Calu3 (cell line): ENCODE measurements at regions of chr5 and their contacts with region 1.

Region 1: DNA sequence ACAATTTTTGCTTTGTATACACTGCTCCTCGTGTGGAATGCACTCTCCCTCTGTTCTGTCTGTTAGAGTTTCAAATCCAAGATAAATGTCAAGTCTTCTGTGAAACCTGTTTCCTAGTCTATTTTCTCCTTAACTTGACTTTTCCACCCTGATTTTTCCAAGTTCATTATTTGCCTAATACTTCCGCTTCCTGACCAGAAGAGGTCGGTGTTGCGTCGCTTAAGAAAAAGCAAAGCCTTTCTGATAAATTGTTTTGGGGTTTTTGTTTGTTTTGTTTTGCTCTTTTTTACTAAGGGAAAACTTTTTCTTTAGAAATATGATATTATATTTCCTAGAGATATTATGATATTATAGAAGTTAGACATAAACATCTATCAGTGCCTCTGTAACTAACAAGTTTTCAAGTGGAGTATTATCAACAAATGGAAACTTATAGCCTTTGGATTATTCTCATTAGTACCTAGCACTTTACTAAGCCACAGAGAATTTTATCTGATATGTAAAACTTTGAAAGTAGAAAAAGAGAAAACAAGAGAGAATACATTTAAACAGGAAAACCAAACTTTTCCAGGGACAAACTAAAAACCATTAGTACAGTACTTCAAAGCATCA is 55.8 kb downstream of the PHAX start:
- DNase-seq: peak; percentile 13
- H3K4me3 Mint-ChIP-seq: no peak overlapping the region
- H3K27ac Mint-ChIP-seq: no peak overlapping the region
- H3K4me1 Mint-ChIP-seq: no peaks in the 10 kb centered on the region
- H3K27me3 Mint-ChIP-seq: no peaks in the 10 kb centered on the region
- CTCF ChIP-seq: peak; percentile 82

Region 2: DNA sequence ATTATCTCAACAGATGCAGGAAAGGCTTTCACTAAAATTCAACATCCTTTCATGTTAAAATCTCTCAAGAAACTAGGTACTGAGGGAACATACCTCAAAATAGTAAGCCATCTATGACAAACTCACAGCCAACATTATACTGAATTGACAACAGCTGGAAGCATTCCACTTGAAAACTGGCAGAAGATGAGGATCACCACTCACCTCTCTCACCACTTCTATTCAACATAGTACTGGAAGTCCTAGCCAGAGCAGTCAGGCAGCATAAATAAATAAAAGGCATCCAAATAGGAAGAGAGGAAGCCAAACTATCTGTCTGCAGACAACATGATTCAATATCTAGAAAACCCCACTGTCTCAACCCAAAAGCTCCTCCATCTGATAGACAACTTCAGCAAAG is 436.9 kb before region 1 on chr5:
- CTCF ChIA-PET with region 1: no interaction called
- intact Hi-C with region 1: no loop called
- DNase-seq: no peak
- H3K4me3 Mint-ChIP-seq: no peak overlapping the region
- H3K27ac Mint-ChIP-seq: no peak overlapping the region
- H3K4me1 Mint-ChIP-seq: no peaks in the 10 kb centered on the region
- H3K27me3 Mint-ChIP-seq: no peaks in the 10 kb centered on the region
- CTCF ChIP-seq: no peak

Region 3: GRCh38 chr5:126801992-126802294 is 145.4 kb after region 1 on chr5:
- CTCF ChIA-PET with region 1: interaction called, 3 read pairs
- intact Hi-C with region 1: loop called (anchors 5 kb)
- DNase-seq: no peak
- H3K4me3 Mint-ChIP-seq: no peak overlapping the region
- H3K27ac Mint-ChIP-seq: no peak overlapping the region
- H3K4me1 Mint-ChIP-seq: peaks cover 23% of the 10 kb centered on the region
- H3K27me3 Mint-ChIP-seq: no peaks in the 10 kb centered on the region
- CTCF ChIP-seq: no peak

Region 4: DNA sequence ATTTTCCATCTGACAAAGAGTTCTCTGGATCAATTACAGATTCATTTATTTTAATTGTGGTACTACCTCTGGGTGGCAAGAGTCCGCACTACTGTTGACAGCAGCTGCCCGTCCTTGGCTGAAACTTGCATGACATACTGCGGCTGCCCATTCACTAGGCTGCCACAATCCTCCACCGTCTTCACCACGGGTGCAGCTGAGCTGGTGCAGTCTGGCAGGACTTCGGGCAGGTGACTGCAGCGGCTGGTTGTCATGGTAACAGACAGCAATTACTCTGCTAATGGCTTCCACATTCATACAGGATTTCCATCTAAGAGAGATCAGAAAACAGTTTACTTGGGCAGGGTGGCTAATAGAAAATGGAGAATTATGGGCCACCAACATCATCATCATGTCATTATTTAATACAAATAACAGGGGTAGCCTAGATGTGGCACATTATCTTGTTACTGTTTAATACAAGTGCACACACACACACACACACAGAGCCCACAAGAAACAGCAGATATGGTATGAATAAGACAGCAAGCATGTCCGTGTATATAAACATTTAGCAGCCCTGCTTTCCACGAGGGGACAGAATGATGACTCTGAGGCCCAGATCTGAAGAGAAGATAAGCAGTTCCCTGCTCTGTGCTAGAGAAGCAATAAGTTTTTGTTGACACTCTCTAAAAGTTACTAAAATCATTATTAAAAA is 261.6 kb after region 1 on chr5:
- CTCF ChIA-PET with region 1: no interaction called
- intact Hi-C with region 1: no loop called
- DNase-seq: peak; percentile 67
- H3K4me3 Mint-ChIP-seq: peak overlapping the region; percentile 50
- H3K27ac Mint-ChIP-seq: peak overlapping the region; percentile 63
- H3K4me1 Mint-ChIP-seq: peaks cover 33% of the 10 kb centered on the region
- H3K27me3 Mint-ChIP-seq: no peaks in the 10 kb centered on the region
- CTCF ChIP-seq: no peak

Region 5: DNA sequence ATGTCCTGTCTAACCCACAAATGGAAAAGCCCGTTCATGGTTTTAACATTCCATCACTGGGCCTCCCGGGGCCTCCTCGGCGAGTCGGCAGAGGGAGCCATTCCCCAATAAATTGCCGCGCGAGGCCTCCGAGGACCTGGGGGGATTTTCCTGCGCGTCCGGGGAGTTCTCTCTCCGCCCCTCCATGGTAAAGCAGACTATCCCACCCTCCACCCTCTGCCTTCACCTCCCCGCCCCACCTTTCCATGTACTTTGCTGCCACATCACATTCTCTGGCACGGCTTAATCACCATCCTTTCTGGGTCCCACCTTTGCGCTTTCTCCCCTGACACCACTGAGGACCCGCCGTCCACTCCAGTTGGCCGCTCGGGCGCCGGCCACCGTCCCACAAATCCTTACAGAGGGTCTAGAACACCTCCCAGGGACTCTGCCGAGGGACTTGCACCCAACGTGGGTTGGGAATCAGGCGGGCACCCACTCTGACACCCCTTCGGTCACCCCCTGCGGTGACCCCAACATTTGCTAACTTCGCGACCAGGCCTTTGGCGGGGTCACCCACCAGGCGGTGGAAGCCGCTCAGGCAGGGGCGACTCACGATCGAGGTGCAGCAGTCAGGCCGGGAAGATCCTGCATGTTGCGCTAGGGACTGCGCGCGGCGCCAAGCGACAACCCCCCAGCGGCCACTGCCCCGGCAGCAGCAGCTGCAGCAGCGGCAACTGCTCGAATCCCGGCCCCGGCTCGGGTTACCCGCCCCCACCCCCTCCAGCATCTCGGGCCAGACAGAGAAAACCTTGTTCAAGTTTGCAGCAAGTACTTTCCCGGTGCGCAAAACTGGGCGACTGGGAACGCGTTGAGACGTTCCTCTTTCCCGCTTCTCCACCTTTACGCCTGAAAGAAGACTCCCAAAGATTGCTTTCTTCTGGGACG is 633.8 kb after region 1 on chr5 and contains the start of gene MEGF10:
- CTCF ChIA-PET with region 1: no interaction called
- intact Hi-C with region 1: loop called (anchors 10 kb)
- DNase-seq: peak; percentile 77
- H3K4me3 Mint-ChIP-seq: peak within 1 kb of the TSS; percentile 79
- H3K27ac Mint-ChIP-seq: no peak within 1 kb of the TSS
- H3K4me1 Mint-ChIP-seq: peaks cover 10% of the 10 kb centered on the region
- H3K27me3 Mint-ChIP-seq: peaks cover 80% of the 10 kb centered on the region
- CTCF ChIP-seq: peak; percentile 86
- total RNA-seq, gene MEGF10: 0.56 and 0.71 TPM in 2 replicates

Region 6: DNA sequence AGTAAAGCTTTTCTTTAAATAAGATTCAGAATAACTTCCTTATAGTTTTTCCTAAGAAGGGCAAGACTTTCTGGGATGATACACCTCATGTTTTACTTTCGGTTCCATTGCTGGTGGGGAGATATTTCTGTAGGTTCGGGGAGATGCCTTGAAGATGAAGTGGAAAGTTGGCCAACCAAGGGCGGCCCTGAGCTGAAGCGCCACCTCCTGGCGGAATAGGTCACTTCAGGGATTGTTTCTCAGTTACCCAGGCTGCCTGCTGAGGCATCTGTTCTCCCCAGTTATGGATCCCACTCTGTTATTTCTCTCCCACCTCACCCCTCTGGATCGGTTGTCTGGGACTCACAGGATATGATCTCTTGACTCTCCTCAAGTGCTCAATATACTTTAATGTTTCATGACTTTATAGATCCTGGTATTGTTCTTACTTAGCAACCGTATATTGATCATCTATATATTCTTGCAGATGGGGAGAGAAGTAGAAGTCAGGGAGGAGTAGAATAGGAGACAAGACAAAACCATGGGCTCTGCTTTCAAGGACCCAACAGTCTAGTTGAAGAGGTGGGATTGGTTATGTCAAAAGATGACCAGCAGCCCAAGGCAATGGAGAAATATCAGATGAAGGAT is 657.5 kb after region 1 on chr5:
- CTCF ChIA-PET with region 1: no interaction called
- intact Hi-C with region 1: loop called (anchors 2 kb)
- DNase-seq: peak; percentile 82
- H3K4me3 Mint-ChIP-seq: no peak overlapping the region
- H3K27ac Mint-ChIP-seq: no peak overlapping the region
- H3K4me1 Mint-ChIP-seq: no peaks in the 10 kb centered on the region
- H3K27me3 Mint-ChIP-seq: peaks cover 11% of the 10 kb centered on the region
- CTCF ChIP-seq: peak; percentile 83